Caco-2 (cell line): ENCODE measurements at regions of chr4 and their contacts with region 1.

Region 1: GRCh38 chr4:58453956-58454355 is 1343.8 kb upstream of the IGFBP7 start:
- DNase-seq: no peak
- H3K4me3 ChIP-seq: no peak overlapping the region
- H3K4me3 Mint-ChIP-seq: no peak overlapping the region
- H3K27ac Mint-ChIP-seq: no peak overlapping the region
- H3K4me1 ChIP-seq: peaks cover 10% of the 10 kb centered on the region
- H3K4me1 Mint-ChIP-seq: peaks cover 6% of the 10 kb centered on the region
- H3K27me3 ChIP-seq: no peaks in the 10 kb centered on the region
- H3K27me3 Mint-ChIP-seq: no peaks in the 10 kb centered on the region
- CTCF ChIP-seq: no peak

Region 2: DNA sequence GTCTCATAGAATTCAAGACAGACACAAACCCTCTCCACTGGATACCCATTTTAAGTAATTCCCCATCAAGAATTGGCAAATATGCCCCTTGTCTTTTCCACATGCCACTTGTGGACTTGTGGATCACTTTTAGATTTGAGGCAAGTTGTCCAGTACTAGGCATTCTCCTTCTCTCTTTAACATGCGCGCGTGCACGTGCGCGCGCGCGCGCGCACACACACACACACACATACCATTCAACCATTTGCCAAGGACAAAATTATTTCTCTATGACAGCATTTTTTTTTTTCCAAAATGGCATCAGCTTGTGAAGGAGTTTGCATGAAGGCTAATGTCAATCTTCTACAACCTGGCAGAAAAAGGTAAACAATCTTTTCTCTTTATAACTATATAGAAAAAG is 18.1 kb before region 1 on chr4:
- CTCF ChIA-PET with region 1: no interaction called
- POLR2A ChIA-PET with region 1: no interaction called
- intact Hi-C with region 1: loop called (anchors 2 kb)
- DNase-seq: no peak
- H3K4me3 ChIP-seq: no peak overlapping the region
- H3K4me3 Mint-ChIP-seq: no peak overlapping the region
- H3K27ac Mint-ChIP-seq: no peak overlapping the region
- H3K4me1 ChIP-seq: no peaks in the 10 kb centered on the region
- H3K4me1 Mint-ChIP-seq: no peaks in the 10 kb centered on the region
- H3K27me3 ChIP-seq: no peaks in the 10 kb centered on the region
- H3K27me3 Mint-ChIP-seq: no peaks in the 10 kb centered on the region
- CTCF ChIP-seq: no peak